Mammary epithelial cell (primary cell): ENCODE measurements at regions of chr16 and their contacts with region 1.

Region 1: DNA sequence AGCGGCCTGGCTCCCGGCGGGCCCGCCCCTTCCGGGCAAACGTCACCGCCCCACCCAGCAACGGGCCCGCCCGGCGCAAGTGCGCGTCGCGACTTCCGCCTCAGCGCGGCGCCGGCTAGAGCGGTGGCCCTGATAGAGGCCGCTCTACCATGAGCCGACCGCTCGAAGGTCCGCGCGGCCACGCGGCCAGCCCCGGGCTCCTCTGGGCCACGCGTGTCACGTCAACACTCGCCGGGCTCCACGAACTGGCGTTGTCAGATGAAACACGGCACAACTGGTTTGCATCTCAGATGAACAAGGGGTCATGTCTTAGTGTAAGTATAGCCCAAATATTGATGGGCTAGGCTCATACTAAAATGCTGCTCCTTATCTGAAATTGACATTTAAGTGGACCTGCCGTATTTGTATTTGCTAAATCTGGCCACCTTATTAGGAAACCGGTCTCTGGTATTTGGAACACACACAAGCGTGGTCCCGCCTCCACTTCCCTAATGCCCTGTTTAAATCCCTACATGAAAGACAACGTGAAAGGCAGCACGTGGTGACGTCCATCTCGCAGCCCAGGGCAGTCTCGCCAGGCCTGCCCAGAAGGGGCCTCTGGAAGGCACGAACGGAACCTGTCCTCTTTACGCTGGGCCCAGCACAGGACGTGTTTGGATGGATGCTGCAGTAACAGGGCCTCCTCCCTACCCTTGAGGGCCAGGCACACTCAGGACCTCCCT is at the start of gene ZNF598:
- DNase-seq: peak; percentile 85
- H3K4me3 ChIP-seq: peak within 1 kb of the TSS; percentile 86 to 90 (median 88)
- H3K27ac ChIP-seq: peak within 1 kb of the TSS; percentile 96
- H3K4me1 ChIP-seq: peaks cover 34% of the 10 kb centered on the region
- H3K27me3 ChIP-seq: no peaks in the 10 kb centered on the region
- CTCF ChIP-seq: no peak
- total RNA-seq, gene ZNF598: 31.8 to 133 TPM

Region 2: GRCh38 chr16:1876468-1876867 is 133.5 kb before region 1 on chr16:
- CTCF ChIA-PET with region 1: no interaction called
- dilution Hi-C with region 1: no loop called
- in situ Hi-C with region 1: no loop called
- intact Hi-C with region 1: no loop called
- DNase-seq: no peak
- H3K4me3 ChIP-seq: no peak overlapping the region
- H3K27ac ChIP-seq: no peak overlapping the region
- H3K4me1 ChIP-seq: no peaks in the 10 kb centered on the region
- H3K27me3 ChIP-seq: peaks cover 3% of the 10 kb centered on the region
- CTCF ChIP-seq: no peak

Region 3: DNA sequence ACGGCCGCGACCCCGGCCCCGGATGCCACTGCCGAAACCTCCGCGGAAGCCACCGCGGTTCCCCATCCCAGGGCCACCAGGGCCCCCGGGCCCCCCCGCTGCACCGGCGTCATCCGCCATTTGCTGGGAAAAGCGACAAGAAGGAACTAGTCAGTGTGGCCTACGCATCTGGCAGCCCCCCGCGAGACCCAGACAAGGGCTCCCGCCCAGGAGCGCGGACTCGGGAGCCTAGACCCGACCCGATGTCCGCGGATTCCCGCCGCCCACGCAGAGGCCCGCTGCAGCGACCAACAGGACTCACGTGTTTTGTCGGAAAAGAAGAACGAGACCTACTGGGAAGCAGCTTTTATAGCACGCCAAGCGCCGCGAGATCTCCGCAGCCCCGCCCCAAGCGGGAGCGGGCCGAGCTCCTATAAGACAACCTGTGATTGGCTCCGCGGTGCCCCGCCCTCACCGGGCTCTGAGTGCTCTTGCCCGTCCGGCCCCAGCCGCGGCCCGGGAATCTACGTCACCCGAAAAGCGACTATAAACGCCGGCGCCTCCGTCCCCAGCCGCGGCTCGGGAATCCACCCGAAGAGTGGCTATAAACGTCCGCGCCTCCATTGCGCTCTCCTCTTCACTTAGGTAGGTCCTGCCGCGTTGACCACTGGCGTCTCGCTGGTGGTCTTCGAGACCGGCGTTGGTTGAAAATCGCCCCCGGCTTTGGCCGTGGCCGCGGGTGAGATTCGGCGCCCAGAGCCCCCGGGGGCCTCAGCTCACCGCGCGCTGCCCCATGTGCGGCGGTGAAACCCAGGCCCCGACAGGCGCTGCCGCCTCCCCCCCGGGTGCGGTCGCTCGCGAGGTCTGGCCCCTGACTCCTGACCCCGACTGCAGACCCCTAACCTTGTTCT is 45.2 kb before region 1 on chr16 and contains the start of gene RPS2:
- CTCF ChIA-PET with region 1: no interaction called
- dilution Hi-C with region 1: no loop called
- in situ Hi-C with region 1: no loop called
- intact Hi-C with region 1: loop called (anchors 2 kb)
- DNase-seq: peak; percentile 96
- H3K4me3 ChIP-seq: peak within 1 kb of the TSS; percentile 59 to 98 (median 94)
- H3K27ac ChIP-seq: peak within 1 kb of the TSS; percentile 87
- H3K4me1 ChIP-seq: peaks cover 16% of the 10 kb centered on the region
- H3K27me3 ChIP-seq: no peaks in the 10 kb centered on the region
- CTCF ChIP-seq: no peak
- total RNA-seq, gene RPS2: 1,442 to 3,060 TPM

Region 4: DNA sequence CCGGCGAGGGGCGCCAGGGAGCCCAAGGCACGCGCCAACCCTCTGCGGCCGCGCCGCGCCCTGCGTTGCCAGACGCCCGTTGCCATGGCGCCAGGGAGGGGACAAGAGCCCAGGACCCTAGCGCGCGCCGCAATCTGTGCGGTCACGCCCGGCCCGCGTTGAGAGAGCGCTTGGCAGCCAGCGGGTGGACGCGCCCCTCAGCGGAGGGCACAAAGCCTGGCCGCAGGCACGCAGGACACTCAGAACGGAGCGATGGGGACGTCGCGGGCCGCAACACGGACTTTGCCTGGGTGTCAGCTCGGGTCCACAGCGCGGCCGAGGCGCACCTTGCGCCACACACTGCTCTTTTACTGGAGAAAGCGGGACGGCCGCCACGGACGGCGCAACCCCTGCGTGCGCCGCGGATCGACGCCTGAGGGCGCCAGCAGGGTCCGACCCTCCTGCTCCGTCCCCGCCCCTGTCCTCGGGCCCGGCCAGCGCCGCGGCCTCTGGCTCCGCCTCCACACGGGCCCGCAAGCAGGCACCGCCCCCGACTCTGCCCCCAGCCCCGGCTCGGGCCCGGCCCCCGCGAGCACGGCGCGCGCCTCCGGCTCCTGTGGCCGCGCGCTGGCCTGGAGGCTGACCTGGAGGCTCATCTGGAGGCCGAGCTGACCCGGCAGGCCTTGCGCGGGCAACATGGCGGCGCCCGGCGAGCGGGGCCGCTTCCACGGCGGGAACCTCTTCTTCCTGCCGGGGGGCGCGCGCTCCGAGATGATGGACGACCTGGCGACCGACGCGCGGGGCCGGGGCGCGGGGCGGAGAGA is 26.2 kb before region 1 on chr16 and contains the start of gene GFER:
- CTCF ChIA-PET with region 1: no interaction called
- dilution Hi-C with region 1: no loop called
- in situ Hi-C with region 1: no loop called
- intact Hi-C with region 1: loop called (anchors 2 kb)
- DNase-seq: peak; percentile 82
- H3K4me3 ChIP-seq: peak within 1 kb of the TSS; percentile 56 to 76 (median 69)
- H3K27ac ChIP-seq: no peak within 1 kb of the TSS
- H3K4me1 ChIP-seq: peaks cover 42% of the 10 kb centered on the region
- H3K27me3 ChIP-seq: no peaks in the 10 kb centered on the region
- CTCF ChIP-seq: peak in 1 of 2 donors; percentile 25
- total RNA-seq, gene GFER: 6.5 to 30.7 TPM

Region 5: GRCh38 chr16:2047330-2048115 is 37.6 kb after region 1 on chr16 and contains the starts of genes NTHL1 and TSC2:
- CTCF ChIA-PET with region 1: no interaction called
- dilution Hi-C with region 1: no loop called
- in situ Hi-C with region 1: no loop called
- intact Hi-C with region 1: loop called (anchors 2 kb)
- DNase-seq: peak; percentile 93
- H3K4me3 ChIP-seq: peak within 1 kb of the TSS; percentile 63 to 90 (median 66)
- H3K27ac ChIP-seq: no peak within 1 kb of the TSS
- H3K4me1 ChIP-seq: peaks cover 19% of the 10 kb centered on the region
- H3K27me3 ChIP-seq: no peaks in the 10 kb centered on the region
- CTCF ChIP-seq: peak in 1 of 2 donors; percentile 48
- total RNA-seq, gene NTHL1: 11.3 to 23.2 TPM
- total RNA-seq, gene TSC2: 56.2 to 92.0 TPM

Region 6: DNA sequence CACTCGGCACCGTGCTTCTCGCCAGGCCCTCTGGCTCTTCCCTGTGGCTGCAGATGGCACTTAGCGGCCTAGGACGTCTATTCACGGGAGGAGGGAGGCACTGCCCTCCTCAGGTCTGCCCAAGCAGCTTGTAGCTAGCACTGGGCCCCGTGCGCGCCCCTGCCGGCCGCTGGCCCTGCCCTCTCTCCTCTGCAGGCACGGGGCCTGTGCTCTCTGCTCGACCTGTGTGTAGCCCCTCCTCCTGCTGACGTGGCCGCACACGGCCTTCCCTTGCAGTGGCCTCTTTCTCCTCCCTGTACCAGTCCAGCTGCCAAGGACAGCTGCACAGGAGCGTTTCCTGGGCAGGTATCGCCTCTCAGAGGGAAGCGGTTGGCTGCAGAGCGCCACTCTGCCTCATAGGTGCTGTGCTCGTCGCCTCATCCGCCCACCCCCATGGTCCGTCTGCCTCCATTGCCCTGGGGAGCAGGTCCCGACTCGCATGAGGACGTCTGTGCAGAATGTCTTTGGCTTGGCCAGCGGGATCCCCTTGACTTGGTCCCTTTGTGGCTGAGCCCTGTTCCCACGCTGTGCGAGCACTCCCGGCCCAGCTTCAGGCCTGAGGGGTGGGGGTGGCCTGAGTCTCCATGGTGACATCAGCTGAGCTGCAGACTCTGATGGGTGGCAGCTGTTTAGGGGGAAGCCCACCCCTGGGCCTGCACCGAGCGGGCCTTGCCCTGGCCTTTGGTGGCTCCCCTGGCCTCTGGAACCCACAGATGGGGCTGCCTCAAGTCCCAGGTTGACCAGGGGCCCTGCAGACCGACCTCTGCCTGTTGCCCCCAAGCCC is 72.4 kb after region 1 on chr16:
- CTCF ChIA-PET with region 1: no interaction called
- dilution Hi-C with region 1: no loop called
- in situ Hi-C with region 1: no loop called
- intact Hi-C with region 1: loop called (anchors 2 kb)
- DNase-seq: peak; percentile 82
- H3K4me3 ChIP-seq: no peak overlapping the region
- H3K27ac ChIP-seq: no peak overlapping the region
- H3K4me1 ChIP-seq: peaks cover 22% of the 10 kb centered on the region
- H3K27me3 ChIP-seq: no peaks in the 10 kb centered on the region
- CTCF ChIP-seq: peak; percentile 4 to 40

Region 7: GRCh38 chr16:2147981-2148671 is 138.2 kb after region 1 on chr16 and contains the start of gene RAB26:
- CTCF ChIA-PET with region 1: no interaction called
- dilution Hi-C with region 1: no loop called
- in situ Hi-C with region 1: loop called in 1 of 2 experiments (anchors 10 kb)
- intact Hi-C with region 1: no loop called
- DNase-seq: peak; percentile 70
- H3K4me3 ChIP-seq: peak within 1 kb of the TSS in 2 of 3 experiments; percentile 32 to 36
- H3K27ac ChIP-seq: no peak within 1 kb of the TSS
- H3K4me1 ChIP-seq: peaks cover 58% of the 10 kb centered on the region
- H3K27me3 ChIP-seq: no peaks in the 10 kb centered on the region
- CTCF ChIP-seq: no peak
- total RNA-seq, gene RAB26: 0.33 to 1.0 TPM